Ascending aorta (tissue), 2 donors: ENCODE measurements at regions of chr4 and their contacts with region 1.

Region 1: GRCh38 chr4:153318696-153319320 is 25.7 kb upstream of the MND1 start:
- DNase-seq: no peak
- H3K4me3 ChIP-seq: no peak overlapping the region
- H3K27ac ChIP-seq: no peak overlapping the region
- H3K4me1 ChIP-seq: no peaks in the 10 kb centered on the region
- H3K27me3 ChIP-seq: no peaks in the 10 kb centered on the region
- CTCF ChIP-seq: peak; percentile 52 to 63 (median 60)

Region 2: GRCh38 chr4:152696764-152697261 is 622.0 kb before region 1 on chr4:
- intact Hi-C with region 1: no loop called
- DNase-seq: no peak
- H3K4me3 ChIP-seq: no peak overlapping the region
- H3K27ac ChIP-seq: no peak overlapping the region
- H3K4me1 ChIP-seq: no peaks in the 10 kb centered on the region
- H3K27me3 ChIP-seq: no peaks in the 10 kb centered on the region
- CTCF ChIP-seq: no peak

Region 3: GRCh38 chr4:153142700-153143438 is 175.9 kb before region 1 on chr4:
- intact Hi-C with region 1: loop called (anchors 1 kb)
- DNase-seq: peak in 1 of 2 donors; percentile 82
- H3K4me3 ChIP-seq: peak overlapping the region in 1 of 2 donors; percentile 40
- H3K27ac ChIP-seq: no peak overlapping the region
- H3K4me1 ChIP-seq: no peaks in the 10 kb centered on the region
- H3K27me3 ChIP-seq: no peaks in the 10 kb centered on the region
- CTCF ChIP-seq: peak; percentile 71 to 89 (median 81)

Region 4: GRCh38 chr4:153207567-153207966 is 111.2 kb before region 1 on chr4:
- intact Hi-C with region 1: loop called (anchors 1 kb)
- DNase-seq: no peak
- H3K4me3 ChIP-seq: no peak overlapping the region
- H3K27ac ChIP-seq: no peak overlapping the region
- H3K4me1 ChIP-seq: no peaks in the 10 kb centered on the region
- H3K27me3 ChIP-seq: no peaks in the 10 kb centered on the region
- CTCF ChIP-seq: peak; percentile 16 to 42 (median 33)